ENCODE measurements at regions of chr5 and their contacts with region 1.

Region 1: GRCh38 chr5:42950440-42951292 is 89.5 kb downstream of the ANXA2R start:
- DNase-seq: peak in 8 of 10 donors; percentile 27 to 72 (median 54)
- ATAC-seq: peak; percentile 8 to 37
- H3K4me3 Mint-ChIP-seq: peak overlapping the region; percentile 91 to 99 (median 96)
- H3K27ac Mint-ChIP-seq: peak overlapping the region; percentile 99 to 100 (median 100)
- H3K4me1 Mint-ChIP-seq: peaks cover 13 to 36% (median 26%) of the 10 kb centered on the region in 4 donors
- H3K27me3 Mint-ChIP-seq: no peaks in the 10 kb centered on the region

Region 2: DNA sequence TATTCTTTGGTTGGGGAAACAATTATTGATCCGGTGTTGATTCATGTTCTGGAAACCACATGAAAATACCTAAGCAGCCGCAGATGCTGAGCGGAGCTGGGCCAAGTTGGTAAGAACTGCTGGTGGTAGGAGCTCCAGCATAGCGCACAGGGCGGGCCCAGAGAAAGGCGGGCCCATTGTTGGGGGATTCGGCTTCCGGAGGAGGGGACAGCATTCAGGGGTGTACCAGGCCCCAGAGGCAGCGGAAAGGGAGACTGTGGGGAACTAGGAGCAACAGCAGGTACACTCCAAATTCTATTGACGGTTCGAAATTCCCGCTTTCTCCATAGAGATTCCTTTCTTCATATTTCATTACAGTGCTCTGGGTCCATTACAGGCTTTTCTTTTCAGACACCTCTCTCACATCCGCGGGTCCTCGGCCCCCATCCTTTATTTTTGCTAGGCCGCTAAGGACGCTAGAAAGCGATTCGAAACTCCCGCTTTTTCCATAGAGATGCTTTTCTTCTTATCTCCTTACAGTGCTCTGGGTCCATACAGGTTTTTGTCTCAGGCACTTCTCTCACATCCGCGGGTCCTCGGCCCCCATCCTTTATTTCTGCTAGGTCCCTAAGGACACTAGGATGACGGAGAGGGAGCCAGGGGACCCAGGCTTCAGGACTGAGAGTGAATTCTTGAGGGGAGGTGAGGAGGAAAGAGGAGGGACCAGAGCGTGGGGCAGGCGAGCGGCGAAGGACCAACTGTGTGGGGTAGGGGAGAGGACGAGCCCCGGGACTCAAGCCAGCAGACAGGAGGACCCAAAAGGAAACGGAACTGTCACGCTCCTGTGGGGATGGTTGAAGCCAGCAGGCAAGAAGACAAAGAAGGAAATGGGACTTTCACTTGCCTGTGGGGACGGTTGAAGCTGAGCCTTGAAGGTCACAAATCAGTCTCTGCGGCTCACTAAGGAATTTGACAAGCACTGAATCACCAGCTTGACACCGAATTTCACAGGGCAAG is 193.8 kb before region 1 on chr5 and contains the start of gene CCDC152:
- POLR2A ChIA-PET with region 1: no interaction called
- DNase-seq: peak; percentile 27 to 72 (median 54)
- ATAC-seq: peak; percentile 99
- H3K4me3 Mint-ChIP-seq: peak within 1 kb of the TSS; percentile 79 to 92 (median 88)
- H3K27ac Mint-ChIP-seq: peak within 1 kb of the TSS; percentile 52 to 94 (median 78)
- H3K4me1 Mint-ChIP-seq: peaks cover 6 to 16% (median 11%) of the 10 kb centered on the region in 4 donors
- H3K27me3 Mint-ChIP-seq: peaks cover 0 to 30% (median 3%) of the 10 kb centered on the region in 5 donors
- polyA plus RNA-seq, gene CCDC152: 3.1 to 4.0 (median 3.7) TPM

Region 3: DNA sequence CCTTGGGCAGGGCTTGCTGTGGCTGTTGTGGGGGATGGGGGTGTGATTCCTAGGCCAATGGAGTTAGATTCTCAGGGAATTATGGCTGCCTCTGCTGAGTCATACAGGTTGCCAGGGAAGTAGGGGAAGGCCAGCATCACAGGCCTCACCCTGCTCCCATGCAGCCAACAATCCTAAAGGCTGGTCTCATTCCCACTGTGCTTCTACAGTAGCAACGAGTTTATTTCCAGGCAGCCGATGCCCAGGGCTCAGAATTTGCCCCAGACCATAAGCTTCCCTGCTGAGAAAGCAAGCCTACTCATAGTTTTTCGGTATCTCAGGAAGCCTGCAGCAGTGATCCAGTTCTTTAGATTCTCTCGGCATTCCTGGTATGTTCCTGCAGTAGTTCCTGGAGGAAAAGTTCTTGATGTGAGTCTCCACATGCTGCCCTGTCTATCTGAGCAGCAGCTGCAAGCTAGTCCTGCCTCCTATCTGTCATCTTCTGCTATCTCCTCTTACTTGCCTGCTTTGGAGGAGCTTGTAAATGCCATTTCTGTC is 79.7 kb before region 1 on chr5:
- POLR2A ChIA-PET with region 1: no interaction called
- DNase-seq: no peak
- ATAC-seq: no peak
- H3K4me3 Mint-ChIP-seq: no peak overlapping the region
- H3K27ac Mint-ChIP-seq: no peak overlapping the region
- H3K4me1 Mint-ChIP-seq: peaks cover 0 to 6% (median 4%) of the 10 kb centered on the region in 4 donors
- H3K27me3 Mint-ChIP-seq: peaks cover 9 to 23% (median 19%) of the 10 kb centered on the region in 5 donors

Region 4: GRCh38 chr5:42908509-42909488 is 41.9 kb before region 1 on chr5:
- POLR2A ChIA-PET with region 1: interaction called, 26 read pairs
- DNase-seq: peak; percentile 78 to 96 (median 90)
- ATAC-seq: peak; percentile 92 to 93
- H3K4me3 Mint-ChIP-seq: peak overlapping the region; percentile 82 to 98 (median 94)
- H3K27ac Mint-ChIP-seq: peak overlapping the region; percentile 89 to 98 (median 97)
- H3K4me1 Mint-ChIP-seq: peaks cover 2 to 22% (median 18%) of the 10 kb centered on the region in 4 donors
- H3K27me3 Mint-ChIP-seq: peaks cover 0 to 3% (median 0%) of the 10 kb centered on the region in 5 donors

Region 5: GRCh38 chr5:42923710-42924109 is 27.0 kb before region 1 on chr5:
- POLR2A ChIA-PET with region 1: interaction called, 10 read pairs
- DNase-seq: no peak
- ATAC-seq: no peak
- H3K4me3 Mint-ChIP-seq: no peak overlapping the region
- H3K27ac Mint-ChIP-seq: peak overlapping the region in 1 of 10 donors; percentile 3
- H3K4me1 Mint-ChIP-seq: no peaks in the 10 kb centered on the region
- H3K27me3 Mint-ChIP-seq: no peaks in the 10 kb centered on the region

Region 6: DNA sequence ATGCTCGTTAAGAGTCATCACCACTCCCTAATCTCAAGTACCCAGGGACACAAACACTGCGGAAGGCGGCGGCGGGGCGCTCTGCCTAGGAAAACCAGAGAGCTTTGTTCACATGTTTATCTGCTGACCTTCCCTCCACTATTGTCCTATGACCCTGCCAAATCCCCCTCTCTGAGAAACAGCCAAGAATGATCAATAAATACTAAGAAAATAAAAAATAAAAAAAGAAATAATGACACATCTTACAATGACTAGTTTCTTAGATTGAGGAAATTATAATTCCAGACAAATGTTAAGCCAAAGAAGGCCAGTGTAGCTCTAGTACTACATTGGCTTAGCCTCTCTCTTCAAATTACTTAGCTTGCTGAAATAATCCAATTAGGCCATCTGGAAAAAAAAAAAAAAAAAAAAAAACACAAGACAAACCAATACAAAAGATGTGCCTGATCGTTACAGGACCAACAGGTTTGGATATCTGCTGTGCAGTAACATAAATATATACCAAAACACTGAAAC is 31.5 kb after region 1 on chr5:
- POLR2A ChIA-PET with region 1: interaction called, 411 read pairs
- DNase-seq: no peak
- ATAC-seq: no peak
- H3K4me3 Mint-ChIP-seq: no peak overlapping the region
- H3K27ac Mint-ChIP-seq: peak overlapping the region in 1 of 10 donors; percentile 39
- H3K4me1 Mint-ChIP-seq: peaks cover 11 to 40% (median 31%) of the 10 kb centered on the region in 4 donors
- H3K27me3 Mint-ChIP-seq: no peaks in the 10 kb centered on the region

Region 7: DNA sequence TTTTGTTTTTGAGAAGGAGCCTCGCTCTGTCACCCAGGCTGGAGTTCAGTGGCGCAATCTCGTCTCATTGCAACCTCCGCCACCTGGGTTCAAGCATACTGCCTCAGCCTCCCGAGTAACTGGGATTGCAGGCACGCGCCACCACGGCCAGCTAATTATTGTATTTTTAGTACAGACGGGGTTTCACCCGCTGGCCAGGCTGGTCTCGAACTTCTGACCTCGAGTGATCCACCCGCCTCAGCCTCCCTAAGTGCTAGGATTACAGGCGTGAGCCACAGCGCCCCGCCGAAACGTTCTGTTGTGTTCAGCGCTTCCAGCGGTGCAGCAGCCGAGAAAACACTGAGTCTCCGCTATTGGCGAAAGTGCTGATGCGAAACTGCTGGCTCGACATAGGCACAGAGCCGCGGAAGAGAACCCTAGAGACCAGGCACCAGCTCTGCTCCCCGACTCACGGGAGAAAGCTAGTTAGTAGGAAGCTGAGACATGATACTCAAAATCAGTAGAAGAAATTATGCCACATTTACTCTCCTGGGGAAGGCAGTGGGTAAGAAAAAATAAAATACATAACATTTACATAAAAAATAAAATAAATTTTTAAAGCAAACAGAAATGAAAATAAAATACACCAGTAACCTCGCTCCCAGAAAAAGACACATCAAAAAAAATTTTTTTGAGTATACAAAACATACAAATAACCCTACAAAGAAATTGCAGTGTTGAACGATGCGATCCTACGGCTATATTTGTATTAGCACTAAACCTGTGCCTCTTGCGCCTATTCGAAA is 57.9 kb after region 1 on chr5:
- POLR2A ChIA-PET with region 1: interaction called, 83 read pairs
- DNase-seq: peak; percentile 80 to 96 (median 91)
- ATAC-seq: peak; percentile 63 to 71
- H3K4me3 Mint-ChIP-seq: peak overlapping the region; percentile 83 to 99 (median 94)
- H3K27ac Mint-ChIP-seq: peak overlapping the region; percentile 92 to 100 (median 99)
- H3K4me1 Mint-ChIP-seq: peaks cover 17 to 40% (median 28%) of the 10 kb centered on the region in 4 donors
- H3K27me3 Mint-ChIP-seq: no peaks in the 10 kb centered on the region

Region 8: GRCh38 chr5:43140286-43140685 is 189.6 kb after region 1 on chr5:
- POLR2A ChIA-PET with region 1: no interaction called
- DNase-seq: peak in 4 of 10 donors; percentile 6 to 53 (median 38)
- ATAC-seq: peak; percentile 54 to 56
- H3K4me3 Mint-ChIP-seq: peak overlapping the region in 7 of 10 donors; percentile 3 to 40 (median 13)
- H3K27ac Mint-ChIP-seq: peak overlapping the region in 9 of 10 donors; percentile 0 to 79 (median 56)
- H3K4me1 Mint-ChIP-seq: peaks cover 19 to 62% (median 54%) of the 10 kb centered on the region in 4 donors
- H3K27me3 Mint-ChIP-seq: no peaks in the 10 kb centered on the region